OCI-LY7 (cell line): ENCODE measurements at regions of chr17 and their contacts with region 1.

Region 1: GRCh38 chr17:38853292-38854219 is at the start of gene RPL23:
- DNase-seq: peak; percentile 99
- H3K4me3 ChIP-seq: peak within 1 kb of the TSS; percentile 87
- H3K27ac ChIP-seq: peak within 1 kb of the TSS; percentile 96
- H3K4me1 ChIP-seq: peaks cover 42% of the 10 kb centered on the region
- CTCF ChIP-seq: no peak
- total RNA-seq, gene RPL23: 1,289 and 1,881 TPM in 2 replicates

Region 2: DNA sequence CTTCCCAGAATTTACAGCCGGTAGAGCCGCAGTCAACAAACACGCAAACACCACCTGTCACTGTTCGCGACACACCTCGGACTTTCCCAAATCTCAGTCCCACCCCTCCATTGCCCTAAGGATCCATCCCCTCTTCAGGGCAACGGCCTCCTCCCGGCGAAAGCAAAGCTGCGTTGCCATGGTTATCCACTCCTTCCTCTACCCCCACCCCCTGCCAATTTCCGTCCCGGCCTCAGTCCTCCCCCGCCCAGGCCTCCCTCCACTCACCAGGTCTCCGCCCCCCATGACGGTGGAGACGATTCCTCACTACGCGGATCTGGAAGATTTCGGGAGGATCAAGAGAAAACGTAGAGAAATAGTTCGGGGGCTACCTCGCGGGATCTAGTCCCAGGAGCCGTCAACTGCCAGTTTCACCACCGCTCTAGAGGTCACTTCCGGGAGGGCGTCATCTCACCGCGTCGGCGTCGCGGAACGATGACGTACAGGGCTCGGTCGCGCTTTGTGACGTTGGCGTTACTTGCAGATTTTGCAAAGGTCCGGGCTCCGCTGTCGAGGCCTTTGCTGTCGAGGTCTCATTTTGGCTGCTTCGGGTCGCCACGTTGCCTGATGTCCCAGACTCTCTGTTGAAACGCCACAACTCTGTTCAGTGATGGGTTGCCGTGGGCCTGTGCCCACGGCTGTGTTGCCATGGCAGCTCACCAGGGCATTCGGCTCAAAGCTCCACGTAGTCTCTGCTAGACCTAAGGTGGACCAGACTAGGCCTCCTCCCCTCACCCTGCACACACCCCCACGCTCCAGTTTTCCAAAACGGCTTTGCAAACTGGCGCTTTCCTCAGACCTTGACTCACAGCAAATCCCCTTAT is 28.4 kb before region 1 on chr17 and contains the start of gene CWC25:
- CTCF ChIA-PET with region 1: no interaction called
- POLR2A ChIA-PET with region 1: interaction called, 5 read pairs
- intact Hi-C with region 1: loop called (anchors 2 kb)
- DNase-seq: peak; percentile 95
- H3K4me3 ChIP-seq: peak within 1 kb of the TSS; percentile 97
- H3K27ac ChIP-seq: peak within 1 kb of the TSS; percentile 72
- H3K4me1 ChIP-seq: peaks cover 17% of the 10 kb centered on the region
- CTCF ChIP-seq: no peak
- total RNA-seq, gene CWC25: 22.2 and 25.4 TPM in 2 replicates